Mammary epithelial cell (primary cell): ENCODE measurements at regions of chrX and their contacts with region 1.

Region 1: DNA sequence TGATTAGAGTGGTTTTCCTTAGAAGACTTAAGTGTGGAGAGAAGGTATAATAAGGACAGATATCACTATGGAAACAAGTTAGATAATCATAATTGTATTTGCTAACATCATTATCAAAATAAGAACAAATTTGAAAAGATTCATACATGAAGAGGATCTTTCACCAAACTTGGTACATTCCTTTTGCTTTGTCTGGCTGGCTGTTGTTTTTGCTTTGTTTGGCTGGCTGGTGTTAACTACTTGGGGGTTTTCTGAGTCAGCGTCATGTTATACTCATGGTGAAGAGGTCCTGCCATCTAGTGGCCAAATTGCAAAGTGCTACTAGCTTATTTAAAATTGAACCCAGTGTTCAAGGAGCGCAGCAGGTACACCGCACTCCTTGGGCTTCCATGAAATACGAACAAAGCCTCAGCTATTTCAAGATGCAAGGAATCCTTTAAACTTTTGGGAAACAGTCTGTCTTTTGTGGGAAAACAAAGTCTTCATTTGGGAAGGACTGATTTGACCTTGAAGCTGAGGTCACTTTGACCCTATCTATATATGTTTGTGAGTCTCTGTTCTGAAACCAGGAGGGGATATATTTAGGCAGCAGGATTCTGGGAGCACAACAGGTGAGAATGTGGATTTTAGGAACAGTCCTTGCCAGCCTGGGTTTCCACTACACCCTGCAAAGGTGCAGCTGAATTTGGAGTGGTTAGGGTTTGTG is 129.7 kb downstream of the PLS3 start:
- DNase-seq: peak; percentile 64
- H3K4me3 ChIP-seq: no peak overlapping the region
- H3K27ac ChIP-seq: no peak overlapping the region
- H3K4me1 ChIP-seq: no peaks in the 10 kb centered on the region
- H3K27me3 ChIP-seq: peaks cover 2% of the 10 kb centered on the region
- CTCF ChIP-seq: peak; percentile 83 to 85

Region 2: DNA sequence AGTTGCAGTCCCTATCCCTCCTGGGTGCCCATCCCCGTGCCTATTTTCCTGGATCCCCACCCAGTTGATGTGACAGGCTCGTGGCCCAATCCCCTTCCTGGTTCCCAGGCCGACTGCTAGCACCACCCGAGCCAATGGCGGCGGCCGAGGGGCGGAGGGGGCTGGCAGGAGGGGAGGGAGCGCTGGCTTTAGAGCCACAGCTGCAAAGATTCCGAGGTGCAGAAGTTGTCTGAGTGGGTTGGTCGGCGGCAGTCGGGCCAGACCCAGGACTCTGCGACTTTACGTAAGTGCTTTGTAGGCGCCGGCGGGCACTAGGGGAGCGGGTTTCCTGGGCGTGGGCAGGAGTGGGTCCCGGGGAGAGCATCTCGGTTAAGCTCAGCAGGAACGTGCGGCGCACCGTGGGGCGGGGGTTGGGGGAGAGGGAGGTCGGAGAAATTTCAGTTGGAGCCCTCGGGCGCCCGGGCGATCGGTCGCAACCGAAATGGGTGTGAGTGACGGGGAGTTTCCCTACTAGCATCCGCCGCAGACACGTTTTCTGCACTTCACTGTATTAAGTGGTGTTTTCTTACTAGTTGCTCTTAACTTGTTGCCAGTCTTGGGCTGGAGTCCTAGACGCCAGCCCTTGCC is 129.6 kb before region 1 on chrX and contains the start of gene PLS3:
- CTCF ChIA-PET with region 1: no interaction called
- dilution Hi-C with region 1: no loop called
- in situ Hi-C with region 1: no loop called
- intact Hi-C with region 1: no loop called
- DNase-seq: peak; percentile 81
- H3K4me3 ChIP-seq: peak within 1 kb of the TSS; percentile 66 to 84 (median 67)
- H3K27ac ChIP-seq: peak within 1 kb of the TSS; percentile 91
- H3K4me1 ChIP-seq: peaks cover 28% of the 10 kb centered on the region
- H3K27me3 ChIP-seq: peaks cover 4% of the 10 kb centered on the region
- CTCF ChIP-seq: no peak
- total RNA-seq, gene PLS3: 253 to 393 TPM

Region 3: DNA sequence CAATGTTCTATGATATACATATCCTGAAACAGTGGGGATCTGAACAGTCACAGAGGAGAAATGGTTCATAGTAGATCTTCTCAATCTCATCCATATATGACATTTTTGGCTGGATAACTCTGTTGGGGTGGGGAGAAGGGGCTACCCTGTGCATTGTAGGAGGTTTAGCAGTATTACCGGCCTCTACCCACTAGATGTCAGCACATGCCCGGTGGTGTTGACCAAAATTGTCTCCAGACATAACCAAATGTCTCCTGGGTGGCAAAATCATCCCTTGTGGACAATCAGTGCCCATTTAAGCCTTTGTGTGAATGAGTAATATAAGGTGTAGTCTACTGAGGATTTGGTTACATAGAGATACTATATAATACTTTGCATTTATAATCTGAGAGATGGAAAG is 39.7 kb before region 1 on chrX:
- CTCF ChIA-PET with region 1: no interaction called
- dilution Hi-C with region 1: no loop called
- in situ Hi-C with region 1: no loop called
- intact Hi-C with region 1: loop called (anchors 2 kb)
- DNase-seq: peak; percentile 44
- H3K4me3 ChIP-seq: no peak overlapping the region
- H3K27ac ChIP-seq: no peak overlapping the region
- H3K4me1 ChIP-seq: no peaks in the 10 kb centered on the region
- H3K27me3 ChIP-seq: no peaks in the 10 kb centered on the region
- CTCF ChIP-seq: peak; percentile 65 to 78